Common myeloid progenitor, CD34-positive (primary cell): ENCODE measurements at regions of chr20 and their contacts with region 1.

Region 1: GRCh38 chr20:35994994-35995453 is 26.6 kb downstream of the CNBD2 start:
- DNase-seq: peak; percentile 81 to 86 (median 85)
- H3K4me3 ChIP-seq: no peak overlapping the region
- H3K27ac ChIP-seq: no peak overlapping the region
- H3K4me1 ChIP-seq: peaks cover 0 to 6% (median 2%) of the 10 kb centered on the region in 4 experiments
- H3K27me3 ChIP-seq: no peaks in the 10 kb centered on the region

Region 2: GRCh38 chr20:35954200-35954906 is 40.7 kb before region 1 on chr20 and contains the start of gene SCAND1:
- CTCF ChIA-PET with region 1: interaction called, 22 read pairs
- POLR2A ChIA-PET with region 1: no interaction called
- DNase-seq: peak; percentile 96 to 98 (median 98)
- H3K4me3 ChIP-seq: peak within 1 kb of the TSS; percentile 82 to 96 (median 90)
- H3K27ac ChIP-seq: peak within 1 kb of the TSS; percentile 91 to 97
- H3K4me1 ChIP-seq: peaks cover 9 to 26% (median 19%) of the 10 kb centered on the region in 4 experiments
- H3K27me3 ChIP-seq: no peaks in the 10 kb centered on the region

Region 3: GRCh38 chr20:35963878-35964277 is 31.1 kb before region 1 on chr20:
- CTCF ChIA-PET with region 1: interaction called, 18 read pairs
- POLR2A ChIA-PET with region 1: no interaction called
- DNase-seq: no peak
- H3K4me3 ChIP-seq: no peak overlapping the region
- H3K27ac ChIP-seq: no peak overlapping the region
- H3K4me1 ChIP-seq: no peaks in the 10 kb centered on the region
- H3K27me3 ChIP-seq: peaks cover 0 to 2% (median 0%) of the 10 kb centered on the region in 5 experiments

Region 4: DNA sequence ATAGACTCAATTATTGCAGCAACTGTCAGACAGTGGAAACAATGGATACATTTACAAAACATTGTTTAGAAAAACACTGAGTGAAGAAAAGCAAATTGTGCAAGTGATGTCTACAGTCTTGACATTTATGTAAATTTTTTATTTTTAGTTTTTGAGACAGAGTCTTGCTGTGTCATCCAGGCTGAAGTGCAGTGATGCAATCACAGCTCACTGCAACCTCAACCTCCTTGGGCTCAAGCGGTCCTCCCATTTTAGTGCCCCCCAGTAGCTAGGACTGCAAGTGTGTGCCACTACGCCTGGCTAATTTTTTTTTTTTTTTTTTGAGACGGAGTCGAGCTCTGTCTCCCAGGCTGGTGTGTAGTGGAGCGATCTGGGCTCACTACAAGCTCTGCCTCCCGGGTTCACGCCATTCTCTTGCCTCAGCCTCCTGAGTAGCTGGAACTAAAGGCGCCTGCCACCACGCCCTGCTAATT is 16.9 kb before region 1 on chr20:
- CTCF ChIA-PET with region 1: interaction called, 56 read pairs
- POLR2A ChIA-PET with region 1: no interaction called
- DNase-seq: peak in 2 of 3 donors; percentile 52 to 58
- H3K4me3 ChIP-seq: no peak overlapping the region
- H3K27ac ChIP-seq: no peak overlapping the region
- H3K4me1 ChIP-seq: peaks cover 0 to 6% (median 0%) of the 10 kb centered on the region in 4 experiments
- H3K27me3 ChIP-seq: no peaks in the 10 kb centered on the region

Region 5: GRCh38 chr20:36008461-36009035 is 13.5 kb after region 1 on chr20:
- CTCF ChIA-PET with region 1: interaction called, 19 read pairs
- POLR2A ChIA-PET with region 1: no interaction called
- DNase-seq: no peak
- H3K4me3 ChIP-seq: no peak overlapping the region
- H3K27ac ChIP-seq: no peak overlapping the region
- H3K4me1 ChIP-seq: no peaks in the 10 kb centered on the region
- H3K27me3 ChIP-seq: no peaks in the 10 kb centered on the region

Region 6: DNA sequence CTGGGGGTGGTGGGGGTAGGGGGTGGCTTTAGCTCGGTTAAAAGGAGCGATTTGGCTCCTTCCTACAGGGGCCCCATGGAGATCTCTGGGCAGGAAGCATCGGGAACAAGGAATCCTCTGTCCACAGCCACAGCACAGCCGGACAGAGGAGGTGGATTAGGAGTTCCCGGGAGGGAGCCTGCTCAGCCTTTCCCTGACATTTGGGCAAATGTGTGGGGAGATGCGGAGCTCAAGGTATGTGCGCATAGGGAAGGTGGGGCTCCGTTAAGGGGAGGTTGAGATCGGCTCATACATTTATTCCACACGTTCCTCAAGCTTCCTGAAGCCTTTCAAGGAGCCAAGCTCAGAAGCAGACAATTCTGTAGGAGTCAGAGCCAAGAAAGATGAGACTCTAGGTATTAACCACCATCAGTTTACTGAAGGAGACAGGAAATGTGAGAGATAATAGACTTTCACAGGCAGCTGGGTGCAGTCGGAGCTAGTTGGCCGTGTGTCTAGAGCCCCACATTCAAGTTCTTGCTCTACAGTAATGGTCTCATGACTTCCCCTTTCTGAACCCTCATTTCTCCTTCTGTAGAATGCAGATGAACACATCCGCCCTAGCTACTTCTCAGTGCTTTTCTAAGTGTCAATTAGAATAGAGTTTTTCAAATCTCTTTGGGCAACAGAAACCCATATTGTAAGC is 118.7 kb after region 1 on chr20:
- CTCF ChIA-PET with region 1: interaction called, 11 read pairs
- POLR2A ChIA-PET with region 1: no interaction called
- DNase-seq: peak in 2 of 3 donors; percentile 60 to 69
- H3K4me3 ChIP-seq: no peak overlapping the region
- H3K27ac ChIP-seq: no peak overlapping the region
- H3K4me1 ChIP-seq: peaks cover 0 to 27% (median 3%) of the 10 kb centered on the region in 4 experiments
- H3K27me3 ChIP-seq: no peaks in the 10 kb centered on the region

Region 7: GRCh38 chr20:36145877-36146707 is 151.1 kb after region 1 on chr20:
- CTCF ChIA-PET with region 1: interaction called, 292 read pairs
- POLR2A ChIA-PET with region 1: interaction called, 4 read pairs
- DNase-seq: no peak
- H3K4me3 ChIP-seq: no peak overlapping the region
- H3K27ac ChIP-seq: no peak overlapping the region
- H3K4me1 ChIP-seq: peaks cover 2 to 14% (median 8%) of the 10 kb centered on the region in 4 experiments
- H3K27me3 ChIP-seq: peaks cover 0 to 10% (median 0%) of the 10 kb centered on the region in 5 experiments

Region 8: GRCh38 chr20:36170542-36171215 is 175.7 kb after region 1 on chr20:
- CTCF ChIA-PET with region 1: no interaction called
- POLR2A ChIA-PET with region 1: no interaction called
- DNase-seq: no peak
- H3K4me3 ChIP-seq: no peak overlapping the region
- H3K27ac ChIP-seq: no peak overlapping the region
- H3K4me1 ChIP-seq: peaks cover 0 to 7% (median 4%) of the 10 kb centered on the region in 4 experiments
- H3K27me3 ChIP-seq: peaks cover 0 to 2% (median 0%) of the 10 kb centered on the region in 5 experiments